ENCODE measurements at regions of chr5 and their contacts with region 1.

Region 1: DNA sequence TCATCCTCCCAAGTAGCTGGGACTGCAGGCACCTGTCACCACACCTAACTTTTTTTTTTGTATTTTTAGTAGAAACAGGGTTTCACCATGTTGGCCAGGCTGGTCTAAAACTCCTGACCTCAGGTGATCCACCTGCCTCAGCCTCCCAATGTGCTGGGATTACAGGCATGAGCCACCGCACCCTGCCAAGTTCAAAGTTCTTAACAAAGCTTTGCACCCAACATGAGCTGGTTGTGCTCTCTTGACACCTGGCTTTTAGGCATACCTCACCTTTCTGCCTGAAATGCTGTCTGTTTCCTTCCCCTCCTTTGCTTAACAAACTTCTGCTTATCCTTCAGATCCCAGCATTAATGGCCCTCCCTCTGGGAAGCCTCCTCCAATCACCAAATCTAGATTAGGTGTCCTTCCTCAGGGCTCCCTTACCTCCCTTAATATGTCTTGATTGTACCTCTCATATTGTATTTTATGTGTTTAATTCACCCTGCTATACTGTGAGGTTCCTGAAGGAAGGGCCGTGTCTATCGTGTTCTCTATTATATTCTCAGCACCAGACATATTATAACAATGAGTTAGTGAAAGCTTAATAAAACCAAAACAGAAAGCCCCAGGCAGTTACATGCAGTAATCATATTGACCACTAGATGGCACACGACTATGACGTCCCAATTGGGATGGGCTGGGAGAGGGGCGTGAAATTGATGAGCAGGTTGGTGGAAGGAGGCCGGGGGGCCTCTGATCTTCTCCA is 62.9 kb upstream of the PPARGC1B start:
- DNase-seq: no peak
- H3K4me3 ChIP-seq: no peak overlapping the region
- H3K27ac ChIP-seq: peak overlapping the region; percentile 68
- H3K4me1 ChIP-seq: peaks cover 48% of the 10 kb centered on the region
- H3K27me3 ChIP-seq: no peaks in the 10 kb centered on the region
- CTCF ChIP-seq: peak; percentile 87

Region 2: DNA sequence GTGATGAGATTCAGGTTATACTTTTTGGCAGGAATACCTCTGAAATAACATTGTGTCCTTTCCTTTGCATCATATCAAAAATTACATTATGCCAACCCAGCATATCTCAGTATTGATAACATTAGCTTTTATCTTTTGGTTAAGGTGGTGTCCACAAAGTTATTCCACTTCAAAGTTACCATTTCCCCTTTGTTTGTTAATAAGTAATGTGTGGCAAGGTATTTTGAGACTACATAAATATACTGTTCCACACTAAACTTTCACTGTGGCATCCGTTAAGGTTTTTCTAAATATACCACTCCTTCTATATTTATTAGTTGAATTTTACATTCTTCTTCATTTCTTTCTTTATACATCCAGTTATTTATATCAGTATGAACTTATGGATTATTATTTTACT is 100.0 kb before region 1 on chr5:
- intact Hi-C with region 1: no loop called
- DNase-seq: no peak
- H3K4me3 ChIP-seq: no peak overlapping the region
- H3K27ac ChIP-seq: no peak overlapping the region
- H3K4me1 ChIP-seq: peaks cover 24% of the 10 kb centered on the region
- H3K27me3 ChIP-seq: no peaks in the 10 kb centered on the region
- CTCF ChIP-seq: no peak

Region 3: DNA sequence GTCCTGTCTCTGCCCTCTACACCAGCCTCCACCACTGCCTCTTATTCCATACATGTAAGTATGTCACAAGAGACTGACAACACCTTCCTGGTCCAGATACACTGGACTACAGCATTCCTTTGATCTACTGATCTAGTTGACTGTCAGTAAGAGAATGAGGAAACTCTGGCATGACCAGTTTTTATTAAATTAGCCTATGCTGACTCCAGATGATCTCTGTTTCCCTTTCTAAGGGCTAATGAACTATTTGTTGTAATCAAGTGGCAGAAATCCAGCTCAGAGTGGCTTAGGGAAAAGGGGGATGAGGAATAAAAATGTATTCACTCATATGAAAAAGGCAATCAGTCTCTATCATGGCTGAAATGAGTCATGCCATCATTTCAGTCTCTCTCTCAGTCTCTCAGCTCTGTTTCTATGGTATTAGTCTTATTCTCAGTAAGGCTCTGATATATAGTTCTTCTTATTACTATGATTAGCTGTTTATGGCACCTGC is 80.4 kb before region 1 on chr5:
- intact Hi-C with region 1: no loop called
- DNase-seq: no peak
- H3K4me3 ChIP-seq: no peak overlapping the region
- H3K27ac ChIP-seq: peak overlapping the region; percentile 22
- H3K4me1 ChIP-seq: peaks cover 44% of the 10 kb centered on the region
- H3K27me3 ChIP-seq: no peaks in the 10 kb centered on the region
- CTCF ChIP-seq: no peak

Region 4: GRCh38 chr5:149828161-149828884 is 161.1 kb after region 1 on chr5:
- intact Hi-C with region 1: loop called (anchors 2 kb)
- DNase-seq: peak; percentile 87
- H3K4me3 ChIP-seq: no peak overlapping the region
- H3K27ac ChIP-seq: peak overlapping the region; percentile 88
- H3K4me1 ChIP-seq: peaks cover 76% of the 10 kb centered on the region
- H3K27me3 ChIP-seq: no peaks in the 10 kb centered on the region
- CTCF ChIP-seq: peak; percentile 88

Region 5: GRCh38 chr5:150017226-150018005 is 350.2 kb after region 1 on chr5:
- intact Hi-C with region 1: no loop called
- DNase-seq: no peak
- H3K4me3 ChIP-seq: no peak overlapping the region
- H3K27ac ChIP-seq: no peak overlapping the region
- H3K4me1 ChIP-seq: peaks cover 22% of the 10 kb centered on the region
- H3K27me3 ChIP-seq: no peaks in the 10 kb centered on the region
- CTCF ChIP-seq: no peak

Region 6: GRCh38 chr5:150272526-150272925 is 605.3 kb after region 1 on chr5:
- intact Hi-C with region 1: no loop called
- DNase-seq: no peak
- H3K4me3 ChIP-seq: no peak overlapping the region
- H3K27ac ChIP-seq: no peak overlapping the region
- H3K4me1 ChIP-seq: no peaks in the 10 kb centered on the region
- H3K27me3 ChIP-seq: peaks cover 15% of the 10 kb centered on the region
- CTCF ChIP-seq: peak; percentile 35

Measured in left ventricle myocardium inferior (tissue), 1 donor.